Lower leg skin (tissue), 4 donors: ENCODE measurements at regions of chr17 and their contacts with region 1.

Region 1: GRCh38 chr17:10871914-10872313 is 34.0 kb upstream of the PIRT start:
- DNase-seq: no peak
- H3K4me3 ChIP-seq: no peak overlapping the region
- CTCF ChIP-seq: no peak
- POLR2A ChIP-seq: no peak

Region 2: GRCh38 chr17:10557422-10557821 is 314.5 kb before region 1 on chr17:
- intact Hi-C with region 1: no loop called
- DNase-seq: no peak
- H3K4me3 ChIP-seq: no peak overlapping the region
- CTCF ChIP-seq: no peak
- POLR2A ChIP-seq: no peak

Region 3: GRCh38 chr17:11296994-11297393 is 425.1 kb after region 1 on chr17:
- intact Hi-C with region 1: loop called (anchors 5 kb)
- DNase-seq: peak in 1 of 2 donors; percentile 25
- H3K4me3 ChIP-seq: no peak overlapping the region
- CTCF ChIP-seq: no peak
- POLR2A ChIP-seq: no peak